CD8-positive, alpha-beta T cell (primary cell): ENCODE measurements at regions of chr18 and their contacts with region 1.

Region 1: GRCh38 chr18:74281639-74282358 is 10.0 kb downstream of the CYB5A start:
- DNase-seq: no peak
- ATAC-seq: no peak
- H3K4me3 ChIP-seq: no peak overlapping the region
- H3K4me3 Mint-ChIP-seq: no peak overlapping the region
- H3K27ac ChIP-seq: no peak overlapping the region
- H3K27ac Mint-ChIP-seq: peak overlapping the region; percentile 6
- H3K4me1 ChIP-seq: peaks cover 13% of the 10 kb centered on the region
- H3K4me1 Mint-ChIP-seq: peaks cover 28% of the 10 kb centered on the region
- H3K27me3 ChIP-seq: no peaks in the 10 kb centered on the region
- H3K27me3 Mint-ChIP-seq: no peaks in the 10 kb centered on the region
- CTCF ChIP-seq: no peak

Region 2: GRCh38 chr18:74251297-74252038 is 30.3 kb before region 1 on chr18:
- CTCF ChIA-PET with region 1: no interaction called
- POLR2A ChIA-PET with region 1: no interaction called
- intact Hi-C with region 1: no loop called
- DNase-seq: no peak
- ATAC-seq: no peak
- H3K4me3 ChIP-seq: no peak overlapping the region
- H3K4me3 Mint-ChIP-seq: no peak overlapping the region
- H3K27ac ChIP-seq: no peak overlapping the region
- H3K27ac Mint-ChIP-seq: no peak overlapping the region
- H3K4me1 ChIP-seq: no peaks in the 10 kb centered on the region
- H3K4me1 Mint-ChIP-seq: no peaks in the 10 kb centered on the region
- H3K27me3 ChIP-seq: no peaks in the 10 kb centered on the region
- H3K27me3 Mint-ChIP-seq: no peaks in the 10 kb centered on the region
- CTCF ChIP-seq: no peak

Region 3: GRCh38 chr18:74264303-74265020 is 17.3 kb before region 1 on chr18:
- CTCF ChIA-PET with region 1: no interaction called
- POLR2A ChIA-PET with region 1: no interaction called
- intact Hi-C with region 1: no loop called
- DNase-seq: no peak
- ATAC-seq: no peak
- H3K4me3 ChIP-seq: no peak overlapping the region
- H3K4me3 Mint-ChIP-seq: no peak overlapping the region
- H3K27ac ChIP-seq: no peak overlapping the region
- H3K27ac Mint-ChIP-seq: no peak overlapping the region
- H3K4me1 ChIP-seq: no peaks in the 10 kb centered on the region
- H3K4me1 Mint-ChIP-seq: no peaks in the 10 kb centered on the region
- H3K27me3 ChIP-seq: no peaks in the 10 kb centered on the region
- H3K27me3 Mint-ChIP-seq: no peaks in the 10 kb centered on the region
- CTCF ChIP-seq: no peak

Region 4: DNA sequence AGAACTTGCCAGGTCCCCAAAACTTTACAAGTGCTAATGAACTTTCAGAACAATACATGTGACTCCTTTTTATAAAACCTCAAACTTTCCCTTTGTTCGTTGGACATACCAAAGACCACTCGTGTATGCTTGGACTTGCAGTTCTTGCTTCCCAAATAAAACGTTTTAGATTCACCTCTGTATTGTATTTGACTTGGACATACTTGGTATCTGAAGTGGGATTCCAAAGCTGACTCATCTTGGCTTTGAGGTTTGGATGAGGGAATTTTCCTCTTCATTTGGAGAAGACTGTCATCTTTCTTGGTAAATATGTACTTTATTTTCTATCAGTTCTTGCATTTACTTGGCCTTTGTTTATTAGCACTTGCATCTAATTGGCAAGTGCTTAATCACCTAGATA is 17.9 kb after region 1 on chr18:
- CTCF ChIA-PET with region 1: no interaction called
- POLR2A ChIA-PET with region 1: no interaction called
- intact Hi-C with region 1: loop called in 1 of 2 experiments (anchors 2 kb)
- DNase-seq: no peak
- ATAC-seq: no peak
- H3K4me3 ChIP-seq: no peak overlapping the region
- H3K4me3 Mint-ChIP-seq: no peak overlapping the region
- H3K27ac ChIP-seq: no peak overlapping the region
- H3K27ac Mint-ChIP-seq: no peak overlapping the region
- H3K4me1 ChIP-seq: no peaks in the 10 kb centered on the region
- H3K4me1 Mint-ChIP-seq: no peaks in the 10 kb centered on the region
- H3K27me3 ChIP-seq: no peaks in the 10 kb centered on the region
- H3K27me3 Mint-ChIP-seq: peaks cover 2% of the 10 kb centered on the region
- CTCF ChIP-seq: no peak

Region 5: DNA sequence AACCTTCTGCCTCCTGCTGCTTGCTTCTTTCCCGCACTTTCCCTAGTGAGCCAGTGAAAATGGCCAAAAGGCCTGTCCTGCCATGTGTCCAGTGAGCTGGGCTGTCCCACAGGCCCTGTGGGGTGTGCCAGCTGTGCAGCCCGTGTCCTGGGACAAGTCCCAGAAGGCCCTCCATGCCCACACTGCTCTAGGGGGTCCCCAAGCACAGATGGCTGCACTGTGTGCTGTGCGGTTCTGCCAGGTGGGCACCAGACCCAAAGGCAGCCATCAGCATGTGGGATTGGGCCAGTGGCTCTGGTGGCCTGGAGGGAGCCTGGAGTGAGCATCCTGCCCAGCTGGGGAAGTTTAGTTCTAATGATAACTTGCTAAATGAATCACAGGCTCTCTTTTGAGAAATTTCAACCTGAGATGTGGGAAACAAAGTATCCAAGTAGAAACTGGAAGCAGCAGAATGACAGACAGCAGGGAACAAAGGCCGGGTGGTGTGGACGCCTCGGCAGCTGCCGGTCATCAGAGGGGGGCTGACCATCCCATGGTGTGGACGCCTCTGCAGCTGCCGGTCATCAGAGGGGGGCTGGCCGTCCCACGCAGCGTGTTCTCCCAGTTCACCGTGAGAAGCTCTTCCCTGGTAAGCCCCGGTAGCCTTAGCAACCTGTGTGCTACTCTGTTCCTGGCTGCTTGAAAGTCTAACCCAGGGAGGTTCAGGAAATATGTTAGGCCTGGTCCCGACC is 204.5 kb after region 1 on chr18:
- CTCF ChIA-PET with region 1: no interaction called
- POLR2A ChIA-PET with region 1: no interaction called
- intact Hi-C with region 1: no loop called
- DNase-seq: no peak
- ATAC-seq: no peak
- H3K4me3 ChIP-seq: no peak overlapping the region
- H3K4me3 Mint-ChIP-seq: no peak overlapping the region
- H3K27ac ChIP-seq: no peak overlapping the region
- H3K27ac Mint-ChIP-seq: no peak overlapping the region
- H3K4me1 ChIP-seq: peaks cover 15% of the 10 kb centered on the region
- H3K4me1 Mint-ChIP-seq: peaks cover 13% of the 10 kb centered on the region
- H3K27me3 ChIP-seq: no peaks in the 10 kb centered on the region
- H3K27me3 Mint-ChIP-seq: no peaks in the 10 kb centered on the region
- CTCF ChIP-seq: no peak